ENCODE measurements at regions of chr3 and their contacts with region 1.

Region 1: GRCh38 chr3:131033480-131034080 is 6.9 kb downstream of the NEK11 start:
- DNase-seq: peak; percentile 65
- H3K4me3 Mint-ChIP-seq: no peak overlapping the region
- H3K27ac Mint-ChIP-seq: no peak overlapping the region
- H3K4me1 Mint-ChIP-seq: no peaks in the 10 kb centered on the region
- H3K27me3 Mint-ChIP-seq: no peaks in the 10 kb centered on the region
- CTCF ChIP-seq: peak; percentile 67

Region 2: DNA sequence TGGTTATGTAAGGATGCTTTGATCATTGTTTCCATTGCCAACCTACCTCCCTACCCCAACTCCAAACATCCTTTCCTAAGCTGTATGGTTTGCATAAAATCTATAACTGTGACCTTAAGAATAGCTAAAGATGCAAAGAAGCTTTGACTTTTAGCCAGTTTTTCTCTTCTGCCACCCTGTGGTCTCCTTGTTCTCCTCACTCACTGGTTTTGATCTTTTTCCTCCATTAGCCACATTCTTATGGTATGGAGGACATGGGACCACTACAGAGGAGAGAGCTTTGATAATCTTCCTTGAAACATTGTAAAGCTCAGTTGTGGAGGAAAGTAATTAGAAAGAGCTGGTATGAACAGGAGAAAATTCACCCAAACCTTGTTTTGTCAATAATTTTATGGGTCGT is 109.0 kb after region 1 on chr3:
- CTCF ChIA-PET with region 1: no interaction called
- intact Hi-C with region 1: loop called (anchors 5 kb)
- DNase-seq: no peak
- H3K4me3 Mint-ChIP-seq: no peak overlapping the region
- H3K27ac Mint-ChIP-seq: no peak overlapping the region
- H3K4me1 Mint-ChIP-seq: no peaks in the 10 kb centered on the region
- H3K27me3 Mint-ChIP-seq: no peaks in the 10 kb centered on the region
- CTCF ChIP-seq: no peak

Region 3: GRCh38 chr3:131200636-131201199 is 167.1 kb after region 1 on chr3:
- CTCF ChIA-PET with region 1: no interaction called
- intact Hi-C with region 1: no loop called
- DNase-seq: no peak
- H3K4me3 Mint-ChIP-seq: no peak overlapping the region
- H3K27ac Mint-ChIP-seq: no peak overlapping the region
- H3K4me1 Mint-ChIP-seq: no peaks in the 10 kb centered on the region
- H3K27me3 Mint-ChIP-seq: no peaks in the 10 kb centered on the region
- CTCF ChIP-seq: no peak

Region 4: GRCh38 chr3:131361464-131362421 is 328.2 kb after region 1 on chr3:
- CTCF ChIA-PET with region 1: no interaction called
- intact Hi-C with region 1: loop called (anchors 5 kb)
- DNase-seq: peak; percentile 100
- H3K4me3 Mint-ChIP-seq: peak overlapping the region; percentile 71
- H3K27ac Mint-ChIP-seq: peak overlapping the region; percentile 77
- H3K4me1 Mint-ChIP-seq: peaks cover 34% of the 10 kb centered on the region
- H3K27me3 Mint-ChIP-seq: no peaks in the 10 kb centered on the region
- CTCF ChIP-seq: no peak

Region 5: DNA sequence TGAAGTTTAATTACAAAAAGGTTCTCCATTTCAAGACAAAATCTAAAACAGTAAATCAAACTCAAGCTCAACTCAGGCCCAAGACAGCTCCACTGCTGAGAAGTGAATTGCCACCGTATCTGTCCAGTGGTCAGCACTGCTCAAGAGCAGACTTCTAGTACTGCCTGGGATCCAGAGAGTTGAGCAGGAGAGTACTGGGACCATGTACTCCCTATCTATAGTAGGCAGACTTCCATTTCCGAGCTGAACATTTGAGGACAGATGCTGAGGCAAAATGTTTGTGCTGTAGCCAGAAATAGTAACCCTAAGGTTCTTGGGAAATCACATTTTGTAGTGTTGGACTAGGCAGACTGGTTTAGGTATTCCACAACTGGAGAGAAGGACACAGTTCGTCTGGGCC is 425.1 kb after region 1 on chr3:
- CTCF ChIA-PET with region 1: no interaction called
- intact Hi-C with region 1: loop called (anchors 10 kb)
- DNase-seq: no peak
- H3K4me3 Mint-ChIP-seq: no peak overlapping the region
- H3K27ac Mint-ChIP-seq: no peak overlapping the region
- H3K4me1 Mint-ChIP-seq: peaks cover 10% of the 10 kb centered on the region
- H3K27me3 Mint-ChIP-seq: no peaks in the 10 kb centered on the region
- CTCF ChIP-seq: no peak

Region 6: DNA sequence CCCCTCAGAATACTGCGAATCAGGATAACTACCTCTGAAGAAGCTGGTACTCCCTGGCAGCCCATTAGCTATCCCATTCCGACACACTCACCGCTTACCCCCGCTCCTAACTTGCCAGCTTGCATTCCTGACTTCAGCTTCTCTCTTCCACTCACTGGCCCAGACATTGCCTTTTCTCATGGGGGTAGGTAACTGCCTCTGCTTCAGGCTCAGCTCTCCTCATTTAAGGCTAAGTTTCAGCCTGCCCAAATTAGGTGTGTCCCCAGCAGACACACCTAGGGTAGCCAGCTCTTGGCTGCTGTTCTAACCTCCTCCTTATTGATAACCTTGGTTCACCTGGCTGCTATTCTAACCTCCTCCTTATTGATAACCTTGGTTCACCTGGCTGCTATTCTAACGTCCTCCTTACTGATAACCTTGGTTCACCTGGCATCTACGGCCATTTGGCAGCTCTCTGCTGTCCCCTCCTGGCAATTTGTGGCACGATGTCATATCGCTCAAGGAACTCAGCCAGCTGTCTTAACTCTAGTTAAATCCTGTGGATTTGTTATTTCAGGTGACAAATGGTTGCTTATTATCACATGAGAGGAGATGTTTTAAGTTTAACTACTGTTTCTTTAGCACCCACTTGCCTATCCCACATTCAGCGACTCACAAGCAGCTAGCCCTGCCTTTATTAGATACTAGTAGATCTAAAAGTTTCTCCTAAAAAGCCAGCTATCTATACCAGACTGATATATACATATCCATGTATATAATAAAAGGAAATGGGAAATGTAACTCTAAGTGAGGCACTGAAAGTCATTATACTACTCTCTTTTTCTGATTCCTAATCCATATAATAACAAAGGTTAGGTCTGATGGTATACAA is 1177.1 kb after region 1 on chr3:
- CTCF ChIA-PET with region 1: interaction called, 5 read pairs
- intact Hi-C with region 1: loop called (anchors 5 kb)
- DNase-seq: peak; percentile 84
- H3K4me3 Mint-ChIP-seq: no peak overlapping the region
- H3K27ac Mint-ChIP-seq: no peak overlapping the region
- H3K4me1 Mint-ChIP-seq: peaks cover 12% of the 10 kb centered on the region
- H3K27me3 Mint-ChIP-seq: no peaks in the 10 kb centered on the region
- CTCF ChIP-seq: peak; percentile 98

Measured in Calu3 (cell line).